ENCODE measurements at regions of chr16 and their contacts with region 1.

Region 1: DNA sequence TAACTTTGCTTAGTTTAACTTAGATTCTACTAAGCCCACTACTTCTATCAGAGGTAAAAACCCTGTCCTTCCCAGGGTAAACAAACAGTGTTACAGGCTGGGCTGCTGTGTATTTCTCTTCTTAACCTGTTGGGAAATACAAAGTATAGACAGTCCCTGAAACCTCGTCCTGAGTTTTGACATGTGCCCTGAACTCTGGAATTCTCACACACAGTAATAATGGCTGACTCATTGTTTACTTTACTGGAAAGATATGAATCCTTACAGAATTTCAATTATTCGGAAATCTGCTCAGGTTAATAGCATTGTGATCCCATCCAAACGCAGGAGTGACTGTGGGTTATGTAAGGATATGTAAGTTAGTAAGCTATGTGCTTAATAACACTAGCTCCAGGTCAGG is 199.1 kb downstream of the TMEM114 start:
- DNase-seq: no peak
- ATAC-seq: no peak

Region 2: GRCh38 chr16:8326249-8326648 is 65.0 kb before region 1 on chr16:
- intact Hi-C with region 1: no loop called
- DNase-seq: no peak
- ATAC-seq: no peak

Region 3: DNA sequence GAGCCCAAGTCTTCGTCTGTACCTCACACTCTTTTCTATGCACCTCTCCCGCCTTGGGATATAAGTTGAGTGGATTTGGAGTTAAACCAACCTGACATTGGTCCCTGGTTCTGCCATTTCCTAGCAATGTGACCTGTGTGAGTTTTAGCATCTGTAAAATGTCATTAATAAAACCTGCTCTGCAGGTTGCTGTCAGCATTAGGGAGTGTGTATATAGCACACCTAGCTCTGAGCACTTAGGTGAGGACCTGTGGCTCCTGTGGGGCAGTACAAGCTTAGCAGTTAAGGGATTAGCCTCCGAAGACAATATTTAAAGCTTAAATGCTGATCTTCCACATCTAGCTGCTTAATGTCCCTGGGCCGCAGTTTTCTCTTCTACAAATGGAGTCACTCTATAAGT is 49.0 kb before region 1 on chr16:
- intact Hi-C with region 1: loop called (anchors 5 kb)
- DNase-seq: no peak
- ATAC-seq: no peak